ENCODE measurements at regions of chr6 and their contacts with region 1.

Region 1: GRCh38 chr6:135145063-135145800 is 35.9 kb upstream of the MYB start:
- DNase-seq: peak; percentile 28
- H3K4me3 Mint-ChIP-seq: peak overlapping the region; percentile 25
- H3K27ac Mint-ChIP-seq: peak overlapping the region; percentile 85
- H3K4me1 Mint-ChIP-seq: peaks cover 62% of the 10 kb centered on the region
- H3K27me3 Mint-ChIP-seq: no peaks in the 10 kb centered on the region

Region 2: DNA sequence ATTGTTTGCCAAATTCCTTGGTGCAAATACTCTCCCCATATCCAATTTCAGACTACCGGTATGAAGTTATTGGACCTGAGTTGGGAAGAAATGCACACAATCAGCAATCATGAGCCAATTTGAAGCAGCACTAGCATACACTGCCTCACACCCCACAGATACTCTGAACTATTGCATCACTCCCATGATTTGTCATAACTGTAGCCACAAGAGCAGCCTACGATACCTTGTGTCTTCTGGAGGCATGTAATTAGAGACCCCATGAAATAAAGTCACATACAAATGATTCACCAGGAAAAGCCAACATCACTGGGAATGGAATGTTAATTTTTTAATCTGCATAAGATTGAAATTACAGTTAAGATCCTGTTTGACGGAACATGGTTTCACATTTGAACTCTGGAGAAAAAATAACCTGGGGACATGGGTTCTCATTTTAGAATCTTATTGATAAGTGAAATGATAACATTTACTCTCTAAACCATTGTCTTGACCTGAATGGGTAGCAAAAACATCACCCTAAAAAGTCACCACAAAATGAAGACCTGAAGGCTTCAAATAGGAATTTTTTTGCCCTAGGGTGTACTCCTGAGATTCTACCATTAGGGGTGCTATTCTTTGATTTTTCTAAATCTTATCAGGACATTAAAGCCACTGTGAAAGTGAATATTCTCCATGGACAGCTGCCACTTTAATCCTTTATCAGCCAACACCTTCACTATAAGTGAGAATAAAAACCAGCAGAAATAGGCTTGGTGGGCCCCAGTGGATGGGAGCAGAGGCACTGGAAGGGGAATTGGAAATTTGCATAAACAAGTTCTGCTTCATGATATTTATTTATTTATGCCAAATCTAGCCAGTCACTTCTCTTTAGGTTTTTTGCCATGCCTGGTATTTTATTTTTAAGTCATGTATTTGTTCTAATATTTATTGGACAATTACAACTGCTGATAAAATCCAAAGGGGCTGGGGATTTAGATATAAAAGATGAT is 56.1 kb before region 1 on chr6:
- CTCF ChIA-PET with region 1: interaction called, 24 read pairs
- DNase-seq: peak; percentile 32
- H3K4me3 Mint-ChIP-seq: peak overlapping the region; percentile 39
- H3K27ac Mint-ChIP-seq: peak overlapping the region; percentile 94
- H3K4me1 Mint-ChIP-seq: peaks cover 80% of the 10 kb centered on the region
- H3K27me3 Mint-ChIP-seq: no peaks in the 10 kb centered on the region

Region 3: DNA sequence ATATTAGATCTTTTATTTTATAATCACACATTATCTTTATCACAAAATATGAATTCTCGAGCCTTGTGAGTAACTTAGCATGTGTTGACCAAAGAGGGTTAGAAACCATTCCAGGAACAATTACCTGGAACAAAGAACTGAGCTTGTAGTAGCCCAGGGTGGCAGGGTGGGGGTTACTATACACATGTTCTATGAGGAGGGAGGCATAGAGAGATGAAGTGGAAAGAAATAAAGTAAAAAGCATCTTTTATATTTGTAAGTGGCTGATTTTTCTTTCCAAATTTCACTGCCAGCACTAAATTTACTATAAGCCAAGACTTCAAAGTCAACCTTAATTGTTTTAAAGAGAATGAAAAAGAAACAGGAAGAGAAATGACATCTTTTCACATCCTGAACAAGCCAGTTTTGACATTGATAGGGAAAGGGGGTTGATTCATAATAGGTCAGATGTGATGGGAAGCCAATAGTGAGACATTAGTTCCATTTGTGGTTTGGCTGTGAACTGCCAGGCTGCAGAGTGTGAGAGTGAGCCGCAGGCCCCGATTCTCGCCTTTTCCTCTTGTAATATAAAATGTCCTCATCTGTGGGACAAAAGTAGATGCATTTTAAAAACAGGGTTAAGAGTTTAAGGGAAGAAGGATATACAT is 16.8 kb before region 1 on chr6:
- CTCF ChIA-PET with region 1: interaction called, 24 read pairs
- DNase-seq: peak; percentile 63
- H3K4me3 Mint-ChIP-seq: peak overlapping the region; percentile 45
- H3K27ac Mint-ChIP-seq: peak overlapping the region; percentile 88
- H3K4me1 Mint-ChIP-seq: peaks cover 39% of the 10 kb centered on the region
- H3K27me3 Mint-ChIP-seq: no peaks in the 10 kb centered on the region

Region 4: GRCh38 chr6:135183532-135184440 is 38.6 kb after region 1 on chr6:
- CTCF ChIA-PET with region 1: interaction called, 73 read pairs
- DNase-seq: peak; percentile 87
- H3K4me3 Mint-ChIP-seq: peak overlapping the region; percentile 89
- H3K27ac Mint-ChIP-seq: peak overlapping the region; percentile 87
- H3K4me1 Mint-ChIP-seq: peaks cover 32% of the 10 kb centered on the region
- H3K27me3 Mint-ChIP-seq: no peaks in the 10 kb centered on the region

Region 5: DNA sequence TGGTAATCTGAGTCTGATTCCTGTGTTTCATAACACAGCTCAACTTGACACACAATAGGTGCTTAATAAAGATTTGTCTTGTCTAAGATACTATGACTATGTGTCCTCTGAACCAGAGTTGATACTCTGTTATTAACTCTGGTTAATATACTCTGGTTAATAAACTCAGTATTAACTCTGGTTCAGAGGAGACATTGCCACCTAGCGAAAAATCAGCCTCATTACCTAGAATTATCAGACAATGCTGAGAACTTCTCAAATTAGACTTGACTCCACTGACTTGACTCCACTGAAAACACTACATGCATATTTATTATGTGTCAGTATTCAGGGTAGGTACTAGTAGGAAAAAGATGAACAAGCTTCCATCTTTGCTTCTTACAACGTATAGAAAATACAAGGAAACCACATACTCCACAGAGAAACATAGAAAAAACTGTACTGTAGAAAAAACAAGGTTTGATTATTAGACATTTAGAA is 278.5 kb after region 1 on chr6:
- CTCF ChIA-PET with region 1: interaction called, 13 read pairs
- DNase-seq: no peak
- H3K4me3 Mint-ChIP-seq: no peak overlapping the region
- H3K27ac Mint-ChIP-seq: no peak overlapping the region
- H3K4me1 Mint-ChIP-seq: peaks cover 4% of the 10 kb centered on the region
- H3K27me3 Mint-ChIP-seq: no peaks in the 10 kb centered on the region